Activated CD4-positive, alpha-beta T cell treated with anti-CD3 and anti-CD28 coated beads for 36 hours (primary cell): ENCODE measurements at regions of chr12 and their contacts with region 1.

Region 1: GRCh38 chr12:122793685-122794106 is 19.3 kb downstream of the CCDC62 start:
- DNase-seq: no peak
- ATAC-seq: peak; percentile 76
- H3K4me3 Mint-ChIP-seq: no peak overlapping the region
- H3K27ac Mint-ChIP-seq: no peak overlapping the region
- H3K4me1 Mint-ChIP-seq: no peaks in the 10 kb centered on the region
- H3K27me3 Mint-ChIP-seq: no peaks in the 10 kb centered on the region

Region 2: DNA sequence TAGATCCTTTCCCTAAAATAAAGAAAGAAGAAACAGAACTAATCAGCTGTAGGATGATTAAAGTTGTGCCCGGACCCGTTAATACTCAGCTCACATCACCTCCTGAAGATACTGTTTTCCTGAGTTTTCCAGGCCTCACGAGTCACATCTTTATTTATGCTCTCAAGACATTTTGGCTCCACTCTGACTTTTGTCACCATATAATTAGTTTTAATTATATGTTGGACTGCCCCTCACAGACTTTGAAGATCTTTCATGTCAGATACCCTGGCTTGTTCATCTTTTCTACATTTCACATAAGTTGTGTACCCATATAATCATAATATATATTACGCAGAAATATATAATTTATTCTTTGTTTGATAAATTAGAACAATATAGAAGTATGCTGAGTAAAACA is 177.9 kb before region 1 on chr12:
- CTCF ChIA-PET with region 1: no interaction called
- POLR2A ChIA-PET with region 1: no interaction called
- intact Hi-C with region 1: no loop called
- DNase-seq: no peak
- ATAC-seq: no peak
- H3K4me3 Mint-ChIP-seq: no peak overlapping the region
- H3K27ac Mint-ChIP-seq: no peak overlapping the region
- H3K4me1 Mint-ChIP-seq: no peaks in the 10 kb centered on the region
- H3K27me3 Mint-ChIP-seq: no peaks in the 10 kb centered on the region

Region 3: DNA sequence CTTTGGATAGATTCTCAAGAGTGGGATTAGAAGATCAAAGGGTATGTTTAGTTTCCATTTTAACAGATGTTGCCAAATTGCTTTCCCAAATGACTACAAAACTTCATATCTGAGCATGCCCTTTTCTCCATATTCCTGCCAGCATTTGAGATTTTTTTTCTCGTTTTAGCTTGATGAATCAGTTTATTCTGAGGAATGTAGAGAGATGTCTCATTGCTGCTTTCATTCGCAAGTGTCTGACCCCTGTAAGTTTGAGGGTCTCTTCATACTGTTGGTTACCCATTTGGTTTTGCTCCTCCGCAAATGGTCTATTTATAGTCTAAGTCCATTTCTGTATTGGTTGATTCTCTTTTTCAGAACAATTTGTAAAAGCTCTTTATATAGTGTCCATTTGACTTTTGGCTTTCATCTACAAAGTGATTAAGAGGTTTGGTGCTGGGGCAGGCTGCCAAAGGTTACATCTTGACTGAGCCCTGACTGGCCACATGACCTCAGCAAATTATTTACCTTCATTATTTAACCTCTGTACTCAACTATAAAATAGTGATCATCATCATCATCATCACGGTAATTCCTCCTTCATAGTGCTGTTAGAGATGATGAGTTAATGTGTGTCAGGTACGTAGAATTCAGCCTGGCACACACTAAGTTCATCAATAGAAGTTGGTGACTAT is 124.2 kb before region 1 on chr12:
- CTCF ChIA-PET with region 1: interaction called, 4 read pairs
- POLR2A ChIA-PET with region 1: interaction called, 10 read pairs
- intact Hi-C with region 1: no loop called
- DNase-seq: no peak
- ATAC-seq: no peak
- H3K4me3 Mint-ChIP-seq: no peak overlapping the region
- H3K27ac Mint-ChIP-seq: no peak overlapping the region
- H3K4me1 Mint-ChIP-seq: no peaks in the 10 kb centered on the region
- H3K27me3 Mint-ChIP-seq: no peaks in the 10 kb centered on the region

Region 4: GRCh38 chr12:122803937-122804336 is 10.2 kb after region 1 on chr12:
- CTCF ChIA-PET with region 1: interaction called, 20 read pairs
- POLR2A ChIA-PET with region 1: no interaction called
- intact Hi-C with region 1: no loop called
- DNase-seq: no peak
- ATAC-seq: no peak
- H3K4me3 Mint-ChIP-seq: no peak overlapping the region
- H3K27ac Mint-ChIP-seq: no peak overlapping the region
- H3K4me1 Mint-ChIP-seq: no peaks in the 10 kb centered on the region
- H3K27me3 Mint-ChIP-seq: no peaks in the 10 kb centered on the region

Region 5: DNA sequence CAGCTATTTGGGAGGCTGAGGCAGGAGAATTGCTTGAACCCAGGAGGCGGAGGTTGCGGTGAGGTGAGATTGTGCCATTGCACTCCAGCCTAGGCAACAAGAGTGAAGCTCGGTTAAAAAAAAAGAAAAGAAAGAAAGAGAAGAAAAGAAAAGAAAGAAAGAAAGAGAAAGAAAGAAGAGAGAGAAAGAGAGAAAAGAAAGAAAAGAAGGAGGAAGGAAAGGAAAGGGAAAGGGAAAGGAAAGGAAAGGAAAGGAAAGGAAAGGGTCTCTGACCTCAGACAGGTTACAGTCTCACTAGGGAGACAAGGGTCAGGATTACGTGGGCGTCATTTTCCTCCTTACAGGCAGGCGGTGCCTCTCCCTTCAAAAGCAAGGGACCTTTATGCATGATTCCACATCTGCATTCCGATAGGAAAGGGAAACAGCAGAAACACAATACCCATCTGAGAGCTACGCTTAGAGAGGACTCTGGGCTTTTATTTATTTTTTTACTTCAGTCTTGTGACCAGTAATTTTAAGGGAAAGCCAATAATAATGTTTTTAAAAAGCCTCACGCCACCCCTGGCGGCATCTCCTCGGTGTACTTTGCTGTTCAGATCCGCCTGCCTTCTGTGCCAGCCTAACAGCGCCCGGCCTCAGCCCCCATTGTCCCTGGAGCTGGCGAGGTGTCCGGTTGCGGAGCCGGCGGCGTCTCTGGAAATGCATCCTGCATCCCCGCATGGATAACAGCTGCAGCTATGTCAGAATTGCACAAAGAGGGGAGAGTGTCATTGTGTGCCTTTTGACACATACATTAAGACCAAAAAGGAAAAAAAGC is 40.6 kb after region 1 on chr12:
- CTCF ChIA-PET with region 1: interaction called, 20 read pairs
- POLR2A ChIA-PET with region 1: no interaction called
- intact Hi-C with region 1: loop called (anchors 2 to 5 kb)
- DNase-seq: peak; percentile 48
- ATAC-seq: peak; percentile 8
- H3K4me3 Mint-ChIP-seq: peak overlapping the region; percentile 75
- H3K27ac Mint-ChIP-seq: peak overlapping the region; percentile 74
- H3K4me1 Mint-ChIP-seq: peaks cover 31% of the 10 kb centered on the region
- H3K27me3 Mint-ChIP-seq: peaks cover 3% of the 10 kb centered on the region

Region 6: DNA sequence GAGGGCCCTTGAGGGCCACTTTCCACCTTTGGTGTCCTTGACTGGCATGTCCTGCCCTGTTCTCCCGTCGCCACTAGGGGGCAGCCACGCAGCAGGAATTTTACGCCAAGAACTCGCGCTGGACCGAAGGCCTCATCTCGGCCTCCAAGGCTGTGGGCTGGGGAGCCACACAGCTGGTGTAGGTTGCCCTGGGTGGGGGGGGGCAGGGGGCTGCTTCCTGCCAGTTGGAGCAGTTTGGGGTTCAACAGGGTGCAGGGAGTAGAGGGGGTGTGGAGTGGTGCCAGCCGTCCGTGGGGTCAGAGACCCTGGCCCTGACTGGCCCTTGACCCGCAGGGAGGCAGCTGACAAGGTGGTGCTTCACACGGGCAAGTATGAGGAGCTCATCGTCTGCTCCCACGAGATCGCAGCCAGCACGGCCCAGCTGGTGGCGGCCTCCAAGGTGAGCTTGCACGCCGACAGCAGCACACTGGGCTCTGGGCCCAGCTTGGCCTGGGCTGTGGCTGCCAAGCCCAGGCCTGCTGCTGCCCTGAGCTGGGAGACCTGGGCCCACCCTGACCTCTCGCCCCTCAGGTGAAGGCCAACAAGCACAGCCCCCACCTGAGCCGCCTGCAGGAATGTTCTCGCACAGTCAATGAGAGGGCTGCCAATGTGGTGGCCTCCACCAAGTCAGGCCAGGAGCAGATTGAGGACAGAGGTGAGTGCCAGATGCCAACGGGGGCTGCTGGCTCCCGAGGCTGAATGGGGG is 66.8 kb after region 1 on chr12:
- CTCF ChIA-PET with region 1: interaction called, 5 read pairs
- POLR2A ChIA-PET with region 1: no interaction called
- intact Hi-C with region 1: loop called in 1 of 2 experiments (anchors 1 kb)
- DNase-seq: peak; percentile 91
- ATAC-seq: peak; percentile 85
- H3K4me3 Mint-ChIP-seq: no peak overlapping the region
- H3K27ac Mint-ChIP-seq: no peak overlapping the region
- H3K4me1 Mint-ChIP-seq: no peaks in the 10 kb centered on the region
- H3K27me3 Mint-ChIP-seq: no peaks in the 10 kb centered on the region

Region 7: DNA sequence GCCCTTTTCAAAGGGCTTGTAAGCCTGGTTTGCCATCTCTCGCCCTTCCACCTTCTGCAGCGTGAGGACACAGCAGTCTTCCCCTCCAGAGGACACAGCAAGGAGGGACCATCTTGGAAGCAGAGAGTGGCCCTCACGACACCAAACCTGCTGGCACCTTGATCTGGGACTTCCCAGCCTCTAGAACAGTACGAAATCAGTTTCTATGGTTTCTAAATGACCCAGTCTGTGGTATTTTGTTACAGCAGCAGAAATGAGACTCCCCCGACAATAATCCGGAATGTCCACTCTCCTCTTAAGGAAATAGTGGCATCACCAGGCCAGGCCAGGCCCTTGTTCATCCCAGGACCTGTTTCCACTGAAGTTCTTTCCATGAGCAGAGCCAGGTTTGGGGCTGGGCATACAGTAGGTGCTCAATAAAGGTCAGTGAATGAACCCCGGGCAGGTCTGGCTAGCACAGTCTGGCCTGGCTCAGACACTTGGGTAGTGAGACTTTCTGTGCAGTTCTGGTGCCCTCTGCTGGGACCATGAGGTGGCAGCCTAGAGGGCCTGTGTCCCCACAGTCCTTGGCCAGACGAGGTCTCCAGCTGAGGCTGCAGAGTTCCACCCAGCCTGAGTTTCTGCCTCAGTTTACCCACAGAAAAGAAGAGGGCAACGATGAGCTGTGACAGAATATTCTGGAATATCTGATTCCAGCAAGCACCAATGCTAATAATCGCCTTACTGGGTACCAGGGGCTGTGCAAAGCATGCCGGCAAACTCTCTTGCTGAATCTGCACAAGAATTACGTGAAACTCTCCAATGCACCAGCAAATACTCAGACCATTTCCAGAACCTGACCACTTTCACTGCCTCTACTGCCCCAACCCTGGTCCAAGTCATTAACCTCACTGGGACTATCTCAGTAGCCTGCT is 158.5 kb after region 1 on chr12:
- CTCF ChIA-PET with region 1: interaction called, 18 read pairs
- POLR2A ChIA-PET with region 1: no interaction called
- intact Hi-C with region 1: loop called (anchors 1 to 2 kb)
- DNase-seq: peak; percentile 85
- ATAC-seq: peak; percentile 97
- H3K4me3 Mint-ChIP-seq: no peak overlapping the region
- H3K27ac Mint-ChIP-seq: no peak overlapping the region
- H3K4me1 Mint-ChIP-seq: peaks cover 4% of the 10 kb centered on the region
- H3K27me3 Mint-ChIP-seq: no peaks in the 10 kb centered on the region